ENCODE measurements at regions of chr11 and their contacts with region 1.

Region 1: DNA sequence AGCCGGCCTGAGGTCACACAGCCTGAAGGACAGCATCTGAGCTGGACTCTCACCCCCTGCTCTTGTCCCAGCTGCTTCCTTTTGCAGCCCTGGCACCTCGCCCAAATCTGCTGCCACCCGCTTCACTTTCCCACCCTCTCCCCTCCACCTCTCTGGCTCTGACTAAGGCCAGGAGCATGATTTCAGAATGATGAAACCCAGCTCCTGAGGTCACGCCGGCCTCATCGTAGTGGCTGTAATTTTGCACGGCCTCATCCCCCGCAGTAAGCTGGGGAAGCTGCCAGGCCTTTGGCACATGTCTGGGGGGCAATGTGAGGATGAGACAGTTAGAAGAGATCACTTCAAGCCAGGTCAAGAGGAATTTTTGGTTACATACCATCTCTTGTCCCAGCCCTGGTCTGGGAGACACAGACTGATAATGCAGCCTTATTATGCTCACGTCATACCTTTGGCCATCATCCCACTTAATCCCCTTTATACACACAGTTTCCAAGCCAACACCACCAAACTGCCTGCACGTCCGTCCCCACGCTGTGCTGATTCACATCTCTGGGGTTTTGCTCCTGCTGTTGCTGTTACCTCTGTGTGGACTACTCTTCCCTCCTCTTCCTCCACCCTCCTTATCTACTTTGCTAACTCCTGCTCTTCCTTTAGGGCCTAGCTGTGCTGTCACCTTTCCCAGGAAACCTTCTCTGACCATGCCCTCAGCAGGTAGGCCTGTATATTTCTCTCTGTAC is 58.1 kb downstream of the CHRDL2 start:
- DNase-seq: peak; percentile 100
- ATAC-seq: peak; percentile 90
- H3K4me3 ChIP-seq: no peak overlapping the region
- H3K27ac ChIP-seq: peak overlapping the region; percentile 89
- H3K4me1 ChIP-seq: peaks cover 24% of the 10 kb centered on the region
- H3K27me3 ChIP-seq: no peaks in the 10 kb centered on the region
- CTCF ChIP-seq: no peak
- POLR2A ChIP-seq: peak; percentile 46
- RAD21 ChIP-seq: peak; percentile 23; the same call in 1 of the 2 replicates

Region 2: DNA sequence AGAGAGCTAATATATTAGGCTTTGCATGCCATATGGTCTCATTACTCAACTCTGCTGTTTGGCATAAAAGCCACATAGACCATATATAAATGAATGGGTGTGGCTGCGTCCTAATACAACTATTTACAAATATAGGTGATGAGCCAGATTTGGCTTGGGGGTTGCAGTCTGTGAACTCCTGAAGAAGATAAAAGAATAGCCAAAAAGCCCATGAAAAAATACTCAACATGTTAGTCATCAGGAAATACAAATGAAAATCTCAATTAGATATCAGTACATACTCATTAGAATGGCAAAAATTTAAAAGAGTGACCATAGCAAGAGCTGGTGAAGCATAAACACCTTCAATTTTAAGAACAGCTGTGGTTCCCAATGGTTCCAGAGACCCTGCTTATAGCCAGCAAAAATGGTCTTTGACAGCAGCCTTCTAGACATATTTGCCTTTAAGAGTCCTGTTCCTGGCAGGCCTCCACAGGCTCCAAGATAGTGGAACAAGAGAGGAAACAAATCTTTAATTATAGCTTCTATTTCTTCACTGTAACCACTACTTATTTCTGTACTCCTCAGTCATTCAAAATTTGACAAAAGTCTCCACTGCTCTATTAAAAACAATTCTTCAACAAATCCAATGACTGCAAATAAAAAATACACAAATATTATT is 518.4 kb before region 1 on chr11:
- CTCF ChIA-PET with region 1: no interaction called
- POLR2A ChIA-PET with region 1: no interaction called
- dilution Hi-C with region 1: no loop called
- in situ Hi-C with region 1: no loop called
- intact Hi-C with region 1: no loop called
- DNase-seq: no peak
- ATAC-seq: 0 out of 2 replicates have a peak, but pooled peaks have one; percentile 37
- H3K4me3 ChIP-seq: no peak overlapping the region
- H3K27ac ChIP-seq: no peak overlapping the region; the same call in 1 of the 2 replicates
- H3K4me1 ChIP-seq: peaks cover 2% of the 10 kb centered on the region; the same call in 1 of the 2 replicates
- H3K27me3 ChIP-seq: no peaks in the 10 kb centered on the region
- CTCF ChIP-seq: no peak
- POLR2A ChIP-seq: no peak
- RAD21 ChIP-seq: no peak

Region 3: GRCh38 chr11:74611369-74611861 is 61.7 kb before region 1 on chr11:
- CTCF ChIA-PET with region 1: no interaction called
- POLR2A ChIA-PET with region 1: no interaction called
- dilution Hi-C with region 1: no loop called
- in situ Hi-C with region 1: no loop called
- intact Hi-C with region 1: no loop called
- DNase-seq: peak; percentile 87
- ATAC-seq: peak; percentile 86
- H3K4me3 ChIP-seq: no peak overlapping the region
- H3K27ac ChIP-seq: no peak overlapping the region
- H3K4me1 ChIP-seq: peaks cover 8% of the 10 kb centered on the region
- H3K27me3 ChIP-seq: no peaks in the 10 kb centered on the region
- CTCF ChIP-seq: peak; percentile 60
- POLR2A ChIP-seq: no peak
- RAD21 ChIP-seq: peak; percentile 65

Region 4: GRCh38 chr11:74650498-74650897 is 22.6 kb before region 1 on chr11:
- CTCF ChIA-PET with region 1: interaction called, 3 read pairs
- POLR2A ChIA-PET with region 1: no interaction called
- dilution Hi-C with region 1: no loop called
- in situ Hi-C with region 1: no loop called
- intact Hi-C with region 1: loop called (anchors 1 kb)
- DNase-seq: peak; percentile 100
- ATAC-seq: peak; percentile 93
- H3K4me3 ChIP-seq: no peak overlapping the region
- H3K27ac ChIP-seq: peak overlapping the region; percentile 4; the same call in 1 of the 2 replicates
- H3K4me1 ChIP-seq: peaks cover 33% of the 10 kb centered on the region
- H3K27me3 ChIP-seq: no peaks in the 10 kb centered on the region
- CTCF ChIP-seq: 0 out of 2 replicates have a peak, but pooled peaks have one; percentile 5
- POLR2A ChIP-seq: no peak
- RAD21 ChIP-seq: peak; percentile 40; the same call in 1 of the 2 replicates

Region 5: DNA sequence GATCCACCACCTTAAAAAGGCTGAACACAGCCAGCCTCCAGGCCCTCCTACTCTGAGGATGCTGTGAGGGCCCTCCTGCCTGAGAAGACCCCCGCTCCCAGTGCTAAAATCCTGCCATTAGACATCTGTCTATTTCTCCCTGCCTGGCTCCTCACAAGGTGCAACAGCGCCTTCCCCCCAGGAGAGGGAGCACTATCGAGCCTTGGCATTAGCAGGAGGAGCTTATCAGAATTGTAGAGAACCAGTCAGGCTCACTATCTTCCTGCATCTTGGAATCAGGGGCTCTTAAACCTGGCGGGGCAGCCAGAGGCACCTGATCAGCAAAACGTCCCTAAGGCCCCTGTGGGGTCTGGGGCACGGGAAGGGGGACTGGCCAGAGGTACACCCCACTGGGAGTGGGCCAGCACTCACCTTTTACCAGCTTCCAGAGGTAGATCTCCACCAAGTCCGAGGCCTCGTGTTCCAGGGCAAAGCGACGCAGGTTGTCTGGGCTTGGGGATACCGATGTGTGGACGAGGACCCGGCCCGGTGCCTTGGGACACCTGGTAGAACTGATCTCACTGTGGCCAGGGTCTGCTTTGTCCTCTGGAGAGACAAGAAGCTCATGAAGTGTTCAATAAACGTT is 29.4 kb after region 1 on chr11:
- CTCF ChIA-PET with region 1: interaction called, 11 read pairs
- POLR2A ChIA-PET with region 1: no interaction called
- dilution Hi-C with region 1: no loop called
- in situ Hi-C with region 1: no loop called
- intact Hi-C with region 1: no loop called
- DNase-seq: peak; percentile 76
- ATAC-seq: peak; percentile 97
- H3K4me3 ChIP-seq: no peak overlapping the region
- H3K27ac ChIP-seq: no peak overlapping the region
- H3K4me1 ChIP-seq: peaks cover 2% of the 10 kb centered on the region
- H3K27me3 ChIP-seq: no peaks in the 10 kb centered on the region
- CTCF ChIP-seq: peak; percentile 95
- POLR2A ChIP-seq: no peak
- RAD21 ChIP-seq: peak; percentile 83